Mucosa of descending colon (tissue), 3 donors: ENCODE measurements at regions of chr11 and their contacts with region 1.

Region 1: GRCh38 chr11:123580557-123581275 is 73.7 kb downstream of the SCN3B start:
- DNase-seq: peak; percentile 66 to 84 (median 74)
- ATAC-seq: peak; percentile 97
- H3K4me3 ChIP-seq: no peak overlapping the region
- H3K4me1 ChIP-seq: peaks cover 2% of the 10 kb centered on the region
- CTCF ChIP-seq: peak; percentile 98

Region 2: GRCh38 chr11:123511037-123511870 is 69.5 kb before region 1 on chr11:
- intact Hi-C with region 1: loop called in 1 of 2 experiments (anchors 2 kb)
- DNase-seq: peak; percentile 81 to 87 (median 83)
- ATAC-seq: peak; percentile 100
- H3K4me3 ChIP-seq: no peak overlapping the region
- H3K4me1 ChIP-seq: no peaks in the 10 kb centered on the region
- CTCF ChIP-seq: peak; percentile 80

Region 3: GRCh38 chr11:123707606-123708205 is 127.0 kb after region 1 on chr11:
- intact Hi-C with region 1: loop called (anchors 5 to 10 kb)
- DNase-seq: peak in 2 of 3 donors; percentile 46 to 83
- ATAC-seq: peak; percentile 69
- H3K4me3 ChIP-seq: no peak overlapping the region
- H3K4me1 ChIP-seq: no peaks in the 10 kb centered on the region
- CTCF ChIP-seq: no peak

Region 4: GRCh38 chr11:123719452-123719851 is 138.7 kb after region 1 on chr11:
- intact Hi-C with region 1: loop called in 1 of 2 experiments (anchors 10 kb)
- DNase-seq: no peak
- ATAC-seq: no peak
- H3K4me3 ChIP-seq: no peak overlapping the region
- H3K4me1 ChIP-seq: no peaks in the 10 kb centered on the region
- CTCF ChIP-seq: no peak